Cardiac septum (tissue), 1 donor: ENCODE measurements at regions of chr16 and their contacts with region 1.

Region 1: GRCh38 chr16:54929090-54930004 is 1.3 kb upstream of the IRX5 start:
- DNase-seq: peak; percentile 100

Region 2: DNA sequence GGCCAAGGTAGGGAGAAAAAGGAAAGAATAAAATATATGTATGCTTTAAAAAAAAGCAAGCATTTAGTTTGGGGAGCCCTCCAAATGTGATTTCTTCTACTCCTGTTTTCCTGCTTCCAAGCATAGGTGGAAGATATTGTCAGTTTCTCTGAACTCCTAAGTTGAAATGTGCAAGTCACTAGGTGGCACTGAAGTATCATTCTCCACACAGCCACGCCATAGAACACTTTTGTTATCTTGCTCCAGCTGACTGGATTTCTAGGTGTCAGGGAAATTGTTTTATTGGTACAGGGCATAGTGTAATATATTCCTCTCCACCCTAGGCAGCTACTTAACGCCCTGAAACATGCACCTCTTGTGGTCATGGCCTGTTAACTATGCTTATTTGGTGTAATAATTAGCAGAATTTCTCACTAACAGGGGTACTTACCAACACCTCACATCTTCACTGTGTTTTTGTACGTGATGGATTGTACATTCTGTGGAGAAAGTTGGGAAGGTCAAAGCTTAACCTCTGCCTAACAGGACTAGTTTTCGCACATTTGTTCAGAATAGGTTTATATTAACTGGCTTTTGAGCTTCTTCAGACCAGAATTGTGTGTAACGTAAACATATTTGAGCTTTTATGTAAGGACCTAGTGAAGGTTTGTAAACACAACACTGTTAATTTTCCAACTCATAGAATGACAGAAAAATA is 1156.0 kb before region 1 on chr16:
- intact Hi-C with region 1: loop called (anchors 5 kb)
- DNase-seq: no peak

Region 3: GRCh38 chr16:53898997-53899396 is 1030.3 kb before region 1 on chr16:
- intact Hi-C with region 1: loop called (anchors 5 kb)
- DNase-seq: no peak

Region 4: GRCh38 chr16:53945996-53946395 is 983.4 kb before region 1 on chr16:
- intact Hi-C with region 1: loop called (anchors 5 kb)
- DNase-seq: no peak

Region 5: DNA sequence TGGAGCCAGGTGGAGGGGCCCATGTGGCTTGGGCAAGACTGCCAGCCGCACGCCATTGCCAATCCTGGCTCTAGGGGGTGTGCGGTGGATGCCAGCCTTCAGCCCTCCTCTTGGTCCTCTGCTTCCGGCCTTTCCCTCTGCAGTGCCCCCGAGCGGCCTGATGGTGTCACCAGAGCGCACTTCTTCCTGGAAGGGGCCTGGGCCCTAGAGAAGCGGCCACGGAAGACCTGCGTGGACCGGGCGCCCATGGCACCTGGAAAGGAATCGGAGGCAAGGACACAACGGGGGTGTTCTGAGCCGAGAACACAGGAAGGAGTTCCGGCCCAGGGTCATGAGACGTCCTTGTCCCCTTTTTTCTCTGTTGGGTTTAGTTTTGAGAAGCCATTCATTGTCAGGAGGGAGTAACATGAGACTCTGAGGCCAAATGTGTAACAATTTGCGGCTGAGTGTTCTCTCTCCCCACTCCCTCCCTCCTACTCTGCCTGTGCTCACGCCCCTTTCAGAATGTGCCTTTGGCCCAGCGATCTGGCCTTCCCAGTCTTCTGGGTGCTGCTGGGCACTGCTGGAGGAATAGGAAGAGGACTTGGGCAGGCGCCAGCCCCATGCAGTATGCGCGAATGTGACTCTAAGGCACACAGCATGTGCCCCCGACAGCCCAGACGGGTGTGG is 735.5 kb before region 1 on chr16:
- intact Hi-C with region 1: loop called (anchors 10 kb)
- DNase-seq: peak; percentile 88

Region 6: GRCh38 chr16:54503011-54503855 is 426.1 kb before region 1 on chr16:
- intact Hi-C with region 1: loop called (anchors 5 kb)
- DNase-seq: peak; percentile 82

Region 7: GRCh38 chr16:55323637-55324490 is 394.5 kb after region 1 on chr16 and contains the start of gene IRX6:
- intact Hi-C with region 1: loop called (anchors 2 kb)
- DNase-seq: peak; percentile 87
- total RNA-seq, gene IRX6: 37.1 TPM